BJ (cell line): ENCODE measurements at regions of chr5 and their contacts with region 1.

Region 1: GRCh38 chr5:95878417-95879323 is 56.1 kb upstream of the GLRX start:
- DNase-seq: no peak
- H3K4me3 ChIP-seq: no peak overlapping the region
- H3K27me3 ChIP-seq: no peaks in the 10 kb centered on the region
- CTCF ChIP-seq: no peak

Region 2: GRCh38 chr5:95583992-95584391 is 294.7 kb before region 1 on chr5:
- CTCF ChIA-PET with region 1: no interaction called
- POLR2A ChIA-PET with region 1: no interaction called
- DNase-seq: no peak
- H3K4me3 ChIP-seq: no peak overlapping the region
- H3K27me3 ChIP-seq: no peaks in the 10 kb centered on the region
- CTCF ChIP-seq: no peak

Region 3: GRCh38 chr5:95986001-95986400 is 107.3 kb after region 1 on chr5:
- CTCF ChIA-PET with region 1: no interaction called
- POLR2A ChIA-PET with region 1: interaction called, 20 read pairs
- DNase-seq: no peak
- H3K4me3 ChIP-seq: no peak overlapping the region
- H3K27me3 ChIP-seq: no peaks in the 10 kb centered on the region
- CTCF ChIP-seq: no peak

Region 4: GRCh38 chr5:96734871-96735325 is 856.2 kb after region 1 on chr5:
- CTCF ChIA-PET with region 1: no interaction called
- POLR2A ChIA-PET with region 1: no interaction called
- DNase-seq: no peak
- H3K4me3 ChIP-seq: no peak overlapping the region
- H3K27me3 ChIP-seq: no peaks in the 10 kb centered on the region
- CTCF ChIP-seq: no peak